ENCODE measurements at regions of chr19 and their contacts with region 1.

Region 1: GRCh38 chr19:47697863-47698609 is 15.2 kb upstream of the EHD2 start:
- DNase-seq: no peak
- H3K4me3 ChIP-seq: no peak overlapping the region
- H3K27ac ChIP-seq: peak overlapping the region; percentile 34
- H3K4me1 ChIP-seq: no peaks in the 10 kb centered on the region
- H3K27me3 ChIP-seq: no peaks in the 10 kb centered on the region
- CTCF ChIP-seq: peak; percentile 91 to 98 (median 94)
- POLR2A ChIP-seq: no peak

Region 2: DNA sequence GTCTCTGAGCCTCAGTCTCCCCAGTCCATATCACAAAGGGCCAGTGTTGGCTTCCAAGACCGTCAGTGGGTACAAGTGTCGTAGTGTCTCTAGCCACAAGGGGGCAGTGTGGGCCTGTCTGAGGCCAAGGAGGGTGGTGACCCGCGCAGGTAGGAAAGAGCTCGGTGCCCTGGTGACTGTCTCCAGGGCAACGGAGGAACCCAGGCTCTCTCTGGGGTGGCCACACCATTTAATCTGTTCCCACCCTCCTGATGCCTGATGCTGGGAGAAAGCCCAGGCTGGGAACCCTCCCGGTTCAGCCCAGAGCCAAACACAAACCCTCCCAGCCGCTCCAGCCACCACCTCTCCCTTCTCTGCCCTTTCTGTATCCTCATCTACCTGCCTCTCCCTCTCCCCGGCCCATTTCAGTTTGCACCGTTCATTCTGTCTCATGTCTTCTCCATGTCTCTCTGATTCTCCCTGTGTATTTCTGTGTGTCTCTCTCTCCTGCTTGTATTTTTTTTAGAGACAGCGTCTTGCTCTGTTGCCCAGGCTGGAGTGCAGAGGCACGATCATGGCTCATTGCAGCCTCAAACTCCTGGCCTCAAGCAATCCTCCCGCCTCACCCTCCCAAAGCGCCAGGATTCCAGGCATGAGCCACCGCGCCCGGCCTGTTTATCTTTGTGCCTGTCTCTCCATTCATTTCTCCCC is 261.2 kb before region 1 on chr19:
- intact Hi-C with region 1: loop called (anchors 5 kb)
- DNase-seq: no peak
- H3K4me3 ChIP-seq: no peak overlapping the region
- H3K27ac ChIP-seq: no peak overlapping the region
- H3K4me1 ChIP-seq: peaks cover 4% of the 10 kb centered on the region
- H3K27me3 ChIP-seq: no peaks in the 10 kb centered on the region
- CTCF ChIP-seq: peak; percentile 64 to 94 (median 93)
- POLR2A ChIP-seq: no peak

Region 3: DNA sequence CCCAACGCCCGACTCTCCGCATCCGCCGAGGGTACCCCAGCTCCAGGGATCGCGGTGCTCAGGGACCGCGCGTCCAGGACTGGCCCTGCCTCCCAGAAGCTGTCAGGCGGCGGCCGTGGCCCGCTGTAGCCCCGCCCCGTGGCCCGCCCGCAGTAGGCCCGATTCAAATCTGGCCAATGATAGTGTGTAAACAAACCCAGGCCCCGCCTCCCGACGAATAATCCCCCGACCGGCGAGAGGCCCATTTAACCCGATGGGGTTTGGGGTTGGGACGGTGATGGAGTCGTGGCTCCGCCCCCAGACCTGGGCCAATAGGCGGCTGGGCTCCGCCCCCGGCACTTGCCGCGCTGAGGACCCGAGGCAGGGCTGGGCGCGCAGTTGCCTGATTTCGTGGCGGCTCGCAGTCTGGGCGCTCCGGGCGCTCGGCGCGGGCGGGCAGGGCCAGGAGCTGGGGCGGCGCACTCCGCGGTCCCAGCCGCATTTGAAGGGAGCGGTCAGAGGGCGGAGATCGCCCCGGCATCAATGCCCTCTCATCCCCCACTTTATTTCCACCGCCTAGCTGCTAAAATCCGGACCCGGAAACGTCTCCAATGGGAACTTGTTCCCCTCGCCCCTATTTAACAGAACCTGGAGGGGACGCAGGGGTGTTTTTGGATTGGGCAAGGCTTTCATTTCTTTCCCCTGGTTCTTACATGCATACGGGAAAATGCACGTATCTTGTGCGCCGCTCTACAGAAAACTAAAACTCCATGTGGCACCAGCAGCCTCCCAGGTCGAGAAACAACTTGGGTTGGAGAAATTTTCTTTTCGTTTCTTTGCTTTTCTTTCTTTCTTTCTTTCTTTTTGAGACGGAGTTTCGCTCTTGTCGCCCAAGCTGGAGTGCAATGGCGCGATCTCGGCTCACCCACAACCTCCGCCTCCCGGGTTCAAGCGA is 97.5 kb before region 1 on chr19:
- intact Hi-C with region 1: loop called (anchors 10 kb)
- DNase-seq: peak; percentile 98 to 99
- H3K4me3 ChIP-seq: peak overlapping the region; percentile 43 to 62
- H3K27ac ChIP-seq: peak overlapping the region; percentile 77
- H3K4me1 ChIP-seq: peaks cover 25% of the 10 kb centered on the region
- H3K27me3 ChIP-seq: no peaks in the 10 kb centered on the region
- CTCF ChIP-seq: no peak
- POLR2A ChIP-seq: peak in 1 of 2 donors; percentile 88

Region 4: DNA sequence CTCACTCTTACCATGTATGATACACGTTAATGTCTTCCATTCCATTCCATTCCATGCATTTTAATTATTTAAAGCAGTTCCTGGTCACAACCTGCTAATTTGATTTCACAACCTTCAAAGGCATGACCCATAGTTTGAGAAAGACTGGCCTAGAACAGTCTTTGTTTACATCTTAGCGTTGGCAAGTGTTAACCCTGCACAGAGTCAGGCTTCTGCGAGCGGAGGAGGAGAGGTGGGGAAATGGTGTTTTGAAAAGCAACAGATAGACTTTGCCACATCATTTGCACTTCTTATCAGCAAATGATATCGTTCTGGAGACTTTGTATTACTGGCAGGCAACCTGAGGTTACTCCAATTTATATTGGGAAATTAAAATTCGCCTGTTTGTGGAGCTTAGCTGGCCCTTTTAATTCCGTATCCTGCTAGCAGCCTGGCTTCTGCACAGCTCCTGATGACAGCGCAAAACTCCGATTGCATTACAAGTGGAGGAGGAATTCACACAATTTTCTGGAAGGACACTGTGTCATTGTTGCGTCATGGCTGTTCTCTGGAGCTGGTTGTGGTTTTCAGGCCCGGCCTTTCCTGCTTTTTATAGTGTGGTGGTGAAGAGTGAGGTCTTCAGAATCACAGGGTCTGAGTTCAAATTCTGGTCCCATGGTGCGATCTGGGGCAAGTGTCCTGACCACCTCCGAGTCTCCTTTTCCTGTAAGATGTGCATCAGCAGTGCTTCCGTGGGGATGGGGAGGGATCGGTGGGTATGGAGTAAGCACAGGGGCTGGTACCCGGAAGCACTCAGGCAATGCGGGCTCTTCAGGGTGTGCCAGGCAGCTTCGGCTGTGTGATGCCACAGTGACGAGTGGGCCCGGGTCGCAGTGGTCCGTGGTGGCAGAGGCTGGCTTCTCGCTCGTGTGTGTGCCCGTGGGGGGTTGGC is 33.9 kb before region 1 on chr19:
- intact Hi-C with region 1: loop called (anchors 1 kb)
- DNase-seq: peak in 1 of 2 donors; percentile 98
- H3K4me3 ChIP-seq: peak overlapping the region in 1 of 2 donors; percentile 25
- H3K27ac ChIP-seq: peak overlapping the region; percentile 98
- H3K4me1 ChIP-seq: peaks cover 91% of the 10 kb centered on the region
- H3K27me3 ChIP-seq: no peaks in the 10 kb centered on the region
- CTCF ChIP-seq: no peak
- POLR2A ChIP-seq: no peak

Region 5: GRCh38 chr19:47745010-47745901 is 47.2 kb after region 1 on chr19 and contains the start of gene NOP53:
- intact Hi-C with region 1: no loop called
- DNase-seq: peak in 1 of 2 donors; percentile 99
- H3K4me3 ChIP-seq: peak within 1 kb of the TSS; percentile 74 to 89
- H3K27ac ChIP-seq: peak within 1 kb of the TSS; percentile 99
- H3K4me1 ChIP-seq: peaks cover 63% of the 10 kb centered on the region
- H3K27me3 ChIP-seq: no peaks in the 10 kb centered on the region
- CTCF ChIP-seq: peak in 1 of 3 experiments; percentile 15
- POLR2A ChIP-seq: peak in 1 of 2 donors; percentile 50
- total RNA-seq, gene NOP53: 517 TPM

Measured in vagina (tissue), 2 donors.